Activated CD4-positive, alpha-beta memory T cell treated with anti-CD3 and anti-CD28 coated beads, Interleukin-2, amount 10 ng/mL, durations not matched to agents 7 days and 5 days (primary cell): ENCODE measurements at regions of chr15 and their contacts with region 1.

Region 1: GRCh38 chr15:51971375-51972133 is at the start of gene LEO1:
- DNase-seq: peak; percentile 92
- H3K4me3 Mint-ChIP-seq: peak within 1 kb of the TSS; percentile 93
- H3K27ac Mint-ChIP-seq: peak within 1 kb of the TSS; percentile 87
- H3K4me1 Mint-ChIP-seq: peaks cover 33% of the 10 kb centered on the region
- H3K27me3 Mint-ChIP-seq: no peaks in the 10 kb centered on the region
- total RNA-seq, gene LEO1: 31.2 to 32.8 TPM

Region 2: GRCh38 chr15:51982013-51982769 is 10.6 kb after region 1 on chr15:
- CTCF ChIA-PET with region 1: interaction called, 21 read pairs
- POLR2A ChIA-PET with region 1: interaction called, 47 read pairs
- DNase-seq: peak; percentile 80
- H3K4me3 Mint-ChIP-seq: peak overlapping the region; percentile 78
- H3K27ac Mint-ChIP-seq: peak overlapping the region; percentile 88
- H3K4me1 Mint-ChIP-seq: peaks cover 20% of the 10 kb centered on the region
- H3K27me3 Mint-ChIP-seq: no peaks in the 10 kb centered on the region

Region 3: DNA sequence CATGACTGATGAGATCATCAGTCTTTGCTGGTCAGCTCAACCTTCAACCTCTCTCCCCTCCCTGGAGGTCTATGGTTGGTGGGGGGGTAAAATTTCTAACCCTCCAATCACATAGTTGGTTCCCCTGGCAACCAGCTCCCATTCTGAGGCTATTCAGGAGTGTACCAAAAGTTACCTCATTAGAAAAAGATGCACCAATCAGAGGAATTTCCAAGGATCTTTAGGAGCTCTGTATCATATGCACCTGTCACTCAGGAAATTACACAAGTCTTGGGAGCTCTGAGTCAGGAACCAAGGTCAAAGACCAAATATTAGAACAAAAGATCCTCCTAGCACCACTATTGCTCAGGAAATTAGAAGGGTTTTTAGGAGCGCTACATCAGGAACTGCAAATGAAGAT is 21.4 kb after region 1 on chr15:
- CTCF ChIA-PET with region 1: no interaction called
- POLR2A ChIA-PET with region 1: no interaction called
- DNase-seq: no peak
- H3K4me3 Mint-ChIP-seq: no peak overlapping the region
- H3K27ac Mint-ChIP-seq: no peak overlapping the region
- H3K4me1 Mint-ChIP-seq: no peaks in the 10 kb centered on the region
- H3K27me3 Mint-ChIP-seq: no peaks in the 10 kb centered on the region

Region 4: DNA sequence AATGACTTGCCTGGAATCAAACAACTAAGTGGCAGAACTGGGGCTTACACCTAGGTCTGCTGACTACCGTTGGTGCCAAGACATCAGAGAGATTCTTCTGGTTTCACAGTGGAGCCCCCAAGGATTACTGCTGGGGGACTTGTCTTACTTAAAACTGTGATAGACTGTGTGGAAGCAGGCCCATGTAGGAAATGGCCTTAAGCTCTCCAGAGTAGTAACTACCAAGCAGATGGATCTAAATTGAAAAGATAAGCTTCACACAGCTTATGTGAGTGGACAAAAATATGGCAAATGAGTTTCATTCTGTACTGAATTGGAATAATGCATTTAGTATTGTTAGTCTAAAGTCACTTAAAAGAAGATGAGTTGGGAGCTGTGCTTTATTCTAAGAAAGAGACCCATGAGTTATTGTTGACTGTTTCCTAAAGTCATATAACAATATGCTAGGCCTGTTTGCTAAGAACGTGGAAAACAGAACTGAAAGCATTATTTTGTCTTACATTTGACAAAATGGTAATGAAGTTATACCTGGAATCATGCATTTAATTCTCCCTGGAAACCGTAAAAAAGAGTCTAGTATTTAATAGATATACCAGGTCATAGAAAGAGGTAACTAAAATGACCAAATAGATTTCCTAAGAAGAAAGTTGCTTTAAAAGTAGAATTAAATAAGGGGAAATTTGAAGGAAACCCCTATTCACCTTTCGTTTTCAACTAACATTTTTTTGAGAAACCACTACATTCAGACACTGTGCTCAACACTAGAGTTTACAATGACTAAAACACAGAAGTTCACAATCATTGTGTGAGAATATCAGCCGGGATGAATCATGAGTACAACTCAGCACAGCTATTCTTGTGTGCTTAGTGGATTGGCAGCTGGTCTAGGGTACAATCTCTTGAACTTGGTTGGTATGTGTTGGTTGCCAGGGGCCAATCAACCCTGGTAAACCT is 34.5 kb after region 1 on chr15:
- CTCF ChIA-PET with region 1: interaction called, 5 read pairs
- POLR2A ChIA-PET with region 1: interaction called, 14 read pairs
- DNase-seq: peak; percentile 24
- H3K4me3 Mint-ChIP-seq: peak overlapping the region; percentile 40
- H3K27ac Mint-ChIP-seq: peak overlapping the region; percentile 77
- H3K4me1 Mint-ChIP-seq: peaks cover 66% of the 10 kb centered on the region
- H3K27me3 Mint-ChIP-seq: no peaks in the 10 kb centered on the region

Region 5: GRCh38 chr15:52227456-52227855 is 255.9 kb after region 1 on chr15:
- CTCF ChIA-PET with region 1: interaction called, 3 read pairs
- POLR2A ChIA-PET with region 1: interaction called, 12 read pairs
- DNase-seq: peak; percentile 77
- H3K4me3 Mint-ChIP-seq: no peak overlapping the region
- H3K27ac Mint-ChIP-seq: no peak overlapping the region
- H3K4me1 Mint-ChIP-seq: peaks cover 18% of the 10 kb centered on the region
- H3K27me3 Mint-ChIP-seq: no peaks in the 10 kb centered on the region

Region 6: DNA sequence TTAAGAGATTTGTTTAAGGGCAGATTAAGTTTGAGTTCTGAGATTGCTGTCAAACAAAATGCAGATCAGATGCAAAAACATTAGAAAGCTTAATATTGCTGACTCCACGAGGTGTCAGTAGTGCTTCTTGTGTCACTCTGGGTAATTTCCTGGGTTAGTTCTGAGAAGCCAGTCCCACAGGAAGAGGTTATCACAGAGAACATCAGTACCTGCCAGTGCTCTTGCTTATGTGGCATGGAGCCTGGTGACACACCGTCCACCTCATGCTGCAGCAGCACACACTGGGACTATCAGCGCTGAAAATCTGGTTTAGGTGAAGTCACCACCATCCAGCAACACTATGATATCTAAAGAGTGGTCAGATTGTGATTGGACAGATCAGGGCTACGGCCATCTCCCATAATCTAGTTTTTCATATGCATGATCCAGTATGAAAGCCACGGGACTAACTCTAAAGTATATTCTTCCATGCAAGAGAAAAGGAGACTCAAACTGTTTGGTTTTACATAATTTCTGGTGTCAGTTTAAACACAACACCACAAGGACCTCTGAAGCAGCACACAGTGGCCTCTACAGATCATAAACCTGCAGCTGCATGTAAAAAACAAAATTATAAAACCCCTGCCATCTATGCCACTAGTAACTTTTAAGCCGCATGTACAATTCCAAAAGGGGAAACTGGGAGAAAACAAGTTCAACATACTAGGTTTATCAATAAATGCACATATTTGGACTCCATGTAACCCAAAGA is 360.1 kb after region 1 on chr15:
- CTCF ChIA-PET with region 1: no interaction called
- POLR2A ChIA-PET with region 1: no interaction called
- DNase-seq: peak; percentile 78
- H3K4me3 Mint-ChIP-seq: peak overlapping the region; percentile 19
- H3K27ac Mint-ChIP-seq: peak overlapping the region; percentile 79
- H3K4me1 Mint-ChIP-seq: peaks cover 45% of the 10 kb centered on the region
- H3K27me3 Mint-ChIP-seq: no peaks in the 10 kb centered on the region